ENCODE measurements at regions of chr5 and their contacts with region 1.

Region 1: DNA sequence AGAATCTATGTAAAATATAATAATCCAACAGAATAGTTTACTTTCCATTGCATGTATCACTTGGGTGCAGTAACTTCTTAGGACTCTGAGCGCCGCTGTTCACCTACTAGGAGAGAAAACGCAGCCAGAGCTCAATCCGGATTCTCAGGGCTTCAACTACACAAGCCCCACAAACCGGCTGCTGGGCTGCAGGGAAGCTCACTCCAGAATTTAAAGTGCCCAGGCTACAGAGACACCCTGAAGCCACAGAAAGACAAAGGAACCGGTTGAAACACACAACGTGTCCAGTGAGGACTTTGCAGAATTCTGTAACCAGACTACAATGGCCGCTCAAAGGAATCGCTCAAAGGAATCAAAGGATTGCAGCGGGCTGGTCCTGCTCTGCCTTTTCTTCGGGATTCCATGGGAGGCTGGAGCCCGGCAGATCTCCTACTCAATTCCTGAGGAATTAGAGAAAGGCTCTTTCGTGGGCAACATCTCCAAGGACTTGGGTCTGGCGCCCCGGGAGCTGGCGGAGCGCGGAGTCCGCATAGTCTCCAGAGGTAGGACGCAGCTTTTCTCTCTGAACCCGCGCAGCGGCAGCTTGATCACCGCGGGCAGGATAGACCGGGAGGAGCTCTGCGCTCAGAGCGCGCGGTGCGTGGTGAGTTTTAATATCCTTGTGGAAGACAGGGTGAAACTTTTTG is at the start of gene PCDHGA10:
- DNase-seq: peak; percentile 33
- H3K4me3 Mint-ChIP-seq: peak within 1 kb of the TSS; percentile 84
- H3K27ac Mint-ChIP-seq: peak within 1 kb of the TSS; percentile 68
- H3K4me1 Mint-ChIP-seq: peaks cover 13% of the 10 kb centered on the region
- H3K27me3 Mint-ChIP-seq: peaks cover 44% of the 10 kb centered on the region
- total RNA-seq, gene PCDHGA10: 0.10 and 0.13 TPM in 2 replicates

Region 2: DNA sequence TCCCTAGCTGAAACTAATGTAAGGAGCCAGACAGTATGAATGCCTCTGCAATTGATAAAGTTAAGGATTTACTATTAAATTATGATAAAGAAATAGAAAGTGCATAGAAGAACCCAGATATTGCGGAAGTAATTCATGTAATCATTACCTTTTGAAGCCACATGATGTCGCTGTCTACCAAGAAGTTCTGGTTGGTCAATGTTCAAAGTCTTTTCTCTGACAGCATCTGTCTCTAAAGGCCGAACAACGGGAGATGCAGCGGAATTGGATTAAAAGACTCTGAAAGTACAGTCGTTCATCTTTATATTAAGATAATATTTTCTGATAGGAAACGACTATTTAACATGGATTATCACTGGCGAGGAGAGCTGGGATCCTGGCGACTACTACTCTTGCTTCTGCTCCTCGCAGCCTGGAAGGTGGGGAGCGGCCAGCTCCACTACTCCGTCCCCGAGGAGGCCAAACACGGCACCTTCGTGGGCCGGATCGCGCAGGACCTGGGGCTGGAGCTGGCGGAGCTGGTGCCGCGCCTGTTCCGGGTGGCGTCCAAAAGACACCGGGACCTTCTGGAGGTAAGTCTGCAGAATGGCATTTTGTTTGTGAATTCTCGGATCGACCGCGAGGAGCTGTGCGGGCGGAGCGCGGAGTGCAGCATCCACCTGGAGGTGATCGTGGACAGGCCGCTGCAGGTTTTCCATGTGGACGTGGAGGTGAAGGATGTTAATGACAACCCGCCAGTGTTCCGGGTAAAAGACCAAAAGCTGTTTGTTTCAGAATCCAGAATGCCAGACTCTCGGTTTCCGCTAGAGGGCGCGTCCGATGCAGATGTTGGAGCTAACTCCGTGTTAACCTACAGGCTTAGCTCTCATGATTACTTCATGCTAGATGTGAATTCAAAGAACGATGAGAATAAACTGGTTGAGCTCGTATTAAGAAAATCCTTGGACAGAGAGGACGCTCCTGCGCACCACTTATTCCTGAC is 571.7 kb before region 1 on chr5 and contains the start of gene PCDHA8:
- intact Hi-C with region 1: loop called (anchors 10 kb)
- DNase-seq: no peak
- H3K4me3 Mint-ChIP-seq: no peak within 1 kb of the TSS
- H3K27ac Mint-ChIP-seq: no peak within 1 kb of the TSS
- H3K4me1 Mint-ChIP-seq: no peaks in the 10 kb centered on the region
- H3K27me3 Mint-ChIP-seq: no peaks in the 10 kb centered on the region
- total RNA-seq, gene PCDHA8: not detected in 2 replicates

Region 3: DNA sequence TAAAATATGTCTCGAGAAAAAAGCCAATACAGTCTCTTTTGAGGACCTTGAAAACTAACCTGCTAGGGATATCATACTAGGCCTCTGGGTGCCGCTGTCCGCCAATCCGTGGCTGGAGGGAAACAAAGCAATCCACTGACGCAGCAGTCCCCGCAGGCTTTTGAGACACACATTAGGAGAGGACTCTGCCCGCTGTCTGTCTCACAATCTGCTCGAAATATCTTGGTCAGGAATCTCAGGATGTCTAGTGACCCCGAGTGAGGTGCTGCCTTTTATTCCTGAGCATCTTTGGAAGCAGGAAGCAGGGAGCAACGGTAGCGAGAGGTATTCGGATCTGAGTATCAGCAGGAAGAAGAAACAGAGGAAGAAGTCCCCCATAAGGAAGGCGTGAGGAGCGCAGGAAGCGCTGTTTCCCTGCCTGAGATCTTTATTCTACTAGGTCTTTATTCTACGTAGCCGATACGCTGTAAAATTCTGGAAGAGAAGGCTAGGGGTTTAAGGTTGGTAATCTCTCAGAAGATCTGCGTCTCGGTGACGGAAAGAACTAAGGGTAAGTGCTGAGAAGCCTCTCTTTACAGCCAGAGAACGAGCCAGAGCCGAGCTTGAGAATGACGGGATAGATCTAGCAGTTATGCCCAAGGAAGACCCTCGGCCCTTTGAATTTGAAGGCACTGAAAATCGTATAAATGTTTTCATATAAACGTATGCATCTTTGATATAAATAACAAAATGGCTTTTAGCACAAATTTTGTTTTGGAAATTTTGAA is 86.7 kb before region 1 on chr5:
- intact Hi-C with region 1: loop called (anchors 2 kb)
- DNase-seq: peak; percentile 59
- H3K4me3 Mint-ChIP-seq: peak overlapping the region; percentile 98
- H3K27ac Mint-ChIP-seq: peak overlapping the region; percentile 83
- H3K4me1 Mint-ChIP-seq: peaks cover 16% of the 10 kb centered on the region
- H3K27me3 Mint-ChIP-seq: peaks cover 12% of the 10 kb centered on the region

Region 4: DNA sequence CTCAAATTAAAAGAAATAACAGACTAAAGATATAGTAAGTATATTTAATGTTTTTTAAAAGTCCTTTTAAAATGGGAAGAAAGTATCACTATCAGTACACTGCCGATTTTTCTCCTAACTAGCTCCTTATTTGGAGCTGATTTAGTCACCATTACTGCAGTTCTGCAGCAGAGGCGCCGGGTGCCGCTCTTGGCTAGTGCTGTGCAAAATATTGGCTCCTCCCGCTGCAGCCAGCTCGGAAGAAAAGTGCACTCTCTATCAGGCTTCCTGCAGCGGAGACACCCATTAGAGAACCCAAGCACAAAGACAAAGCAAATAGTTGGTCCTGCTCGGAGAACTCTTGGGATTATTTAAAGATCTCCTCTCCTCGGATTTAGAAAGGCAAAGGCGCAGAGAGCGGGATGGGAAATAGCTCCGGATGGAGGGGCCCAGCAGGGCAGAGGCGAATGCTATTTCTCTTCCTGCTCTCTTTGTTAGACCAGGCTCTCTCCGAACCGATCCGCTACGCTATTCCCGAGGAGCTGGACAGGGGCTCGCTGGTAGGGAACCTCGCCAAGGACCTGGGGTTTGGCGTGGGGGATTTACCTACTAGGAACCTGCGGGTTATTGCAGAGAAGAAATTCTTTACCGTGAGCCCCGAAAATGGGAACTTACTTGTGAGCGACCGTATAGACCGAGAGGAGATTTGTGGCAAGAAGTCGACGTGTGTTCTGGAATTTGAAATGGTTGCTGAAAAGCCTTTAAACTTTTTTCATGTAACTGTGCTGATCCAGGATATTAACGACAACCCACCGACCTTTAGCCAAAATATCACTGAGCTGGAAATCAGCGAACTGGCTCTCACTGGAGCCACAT is 42.8 kb before region 1 on chr5 and contains the start of gene PCDHGB3:
- intact Hi-C with region 1: loop called (anchors 5 kb)
- DNase-seq: no peak
- H3K4me3 Mint-ChIP-seq: peak within 1 kb of the TSS; percentile 74
- H3K27ac Mint-ChIP-seq: peak within 1 kb of the TSS; percentile 55
- H3K4me1 Mint-ChIP-seq: no peaks in the 10 kb centered on the region
- H3K27me3 Mint-ChIP-seq: peaks cover 24% of the 10 kb centered on the region
- total RNA-seq, gene PCDHGB3: 0.47 and 0.66 TPM in 2 replicates